Natural killer cell (primary cell): ENCODE measurements at regions of chr4 and their contacts with region 1.

Region 1: DNA sequence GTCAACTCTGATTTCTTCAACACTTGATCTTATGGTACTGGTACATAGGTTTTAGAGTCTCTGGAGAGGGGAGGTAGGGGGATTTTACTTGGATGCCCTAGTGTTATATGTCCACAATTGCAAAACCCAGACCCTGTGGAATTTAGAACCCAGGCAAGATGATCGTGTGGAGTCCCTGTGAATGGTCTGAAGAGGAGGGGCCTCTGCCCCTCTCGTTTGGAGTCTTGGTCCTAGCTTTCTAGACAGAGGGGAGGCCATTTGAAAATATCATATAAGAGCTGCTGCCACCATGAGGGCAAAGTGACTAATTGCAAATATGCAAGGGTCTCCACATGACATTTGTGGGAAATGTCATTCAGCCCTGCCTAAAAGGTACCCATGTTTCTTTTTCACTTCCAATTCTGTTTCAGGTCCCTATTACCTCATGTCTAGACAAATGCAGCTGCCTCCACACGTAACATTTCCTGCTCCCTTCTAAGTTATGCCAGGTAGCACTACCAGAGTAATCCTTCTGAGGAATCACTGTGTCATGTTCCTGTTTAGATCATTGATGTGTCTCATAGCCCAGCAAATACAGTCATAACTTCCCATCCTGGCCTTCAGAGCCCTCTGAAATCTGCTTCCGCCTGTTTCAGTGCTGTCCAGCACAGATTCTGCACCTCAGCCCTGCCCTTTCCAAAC is 126.8 kb downstream of the KLHL8 start:
- DNase-seq: peak in 1 of 2 donors; percentile 73
- ATAC-seq: peak; percentile 76 to 92 (median 81)
- H3K4me3 ChIP-seq: no peak overlapping the region
- H3K4me3 Mint-ChIP-seq: no peak overlapping the region
- H3K27ac ChIP-seq: no peak overlapping the region
- H3K27ac Mint-ChIP-seq: peak overlapping the region; percentile 26 to 66
- H3K4me1 ChIP-seq: no peaks in the 10 kb centered on the region
- H3K4me1 Mint-ChIP-seq: peaks cover 20 to 24% of the 10 kb centered on the region in 2 donors
- H3K27me3 ChIP-seq: no peaks in the 10 kb centered on the region
- H3K27me3 Mint-ChIP-seq: no peaks in the 10 kb centered on the region
- CTCF ChIP-seq: peak; percentile 62

Region 2: GRCh38 chr4:86898562-86898961 is 195.0 kb before region 1 on chr4:
- intact Hi-C with region 1: no loop called
- DNase-seq: no peak
- ATAC-seq: no peak
- H3K4me3 ChIP-seq: no peak overlapping the region
- H3K4me3 Mint-ChIP-seq: no peak overlapping the region
- H3K27ac ChIP-seq: no peak overlapping the region
- H3K27ac Mint-ChIP-seq: no peak overlapping the region
- H3K4me1 ChIP-seq: no peaks in the 10 kb centered on the region
- H3K4me1 Mint-ChIP-seq: no peaks in the 10 kb centered on the region
- H3K27me3 ChIP-seq: no peaks in the 10 kb centered on the region
- H3K27me3 Mint-ChIP-seq: no peaks in the 10 kb centered on the region
- CTCF ChIP-seq: no peak

Region 3: DNA sequence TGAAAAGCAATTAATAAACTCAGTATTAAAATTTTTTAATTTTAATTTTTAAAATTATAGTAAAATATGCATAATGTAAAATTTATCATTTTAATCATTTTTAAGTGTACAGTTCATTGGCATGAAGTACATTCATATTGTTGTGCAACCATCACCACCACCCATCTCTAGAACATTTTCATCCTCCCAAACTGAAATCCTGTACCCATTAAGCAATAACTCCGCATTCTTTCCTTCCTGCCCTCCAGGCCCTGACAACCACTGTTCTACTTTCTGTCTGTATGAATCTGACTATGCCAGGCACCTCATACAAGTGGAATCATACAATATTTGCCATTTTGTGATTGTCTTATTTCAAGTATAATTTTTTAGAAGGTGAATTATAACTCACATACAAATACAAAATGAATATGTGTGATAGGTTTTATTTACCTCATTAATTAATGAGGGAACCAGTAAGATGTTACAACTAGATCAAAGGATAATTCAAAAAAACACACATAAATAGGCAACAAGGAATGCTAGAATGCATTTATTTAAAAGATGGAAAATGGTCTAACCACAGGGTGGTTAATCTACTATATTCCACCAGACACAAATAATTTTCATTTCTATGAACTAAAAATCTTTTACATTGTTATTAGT is 171.9 kb before region 1 on chr4:
- intact Hi-C with region 1: loop called (anchors 1 kb)
- DNase-seq: no peak
- ATAC-seq: no peak
- H3K4me3 ChIP-seq: no peak overlapping the region
- H3K4me3 Mint-ChIP-seq: no peak overlapping the region
- H3K27ac ChIP-seq: no peak overlapping the region
- H3K27ac Mint-ChIP-seq: no peak overlapping the region
- H3K4me1 ChIP-seq: no peaks in the 10 kb centered on the region
- H3K4me1 Mint-ChIP-seq: peaks cover 0 to 4% of the 10 kb centered on the region in 2 donors
- H3K27me3 ChIP-seq: no peaks in the 10 kb centered on the region
- H3K27me3 Mint-ChIP-seq: no peaks in the 10 kb centered on the region
- CTCF ChIP-seq: no peak